HEK293 (cell line): ENCODE measurements at regions of chr18 and their contacts with region 1.

Region 1: DNA sequence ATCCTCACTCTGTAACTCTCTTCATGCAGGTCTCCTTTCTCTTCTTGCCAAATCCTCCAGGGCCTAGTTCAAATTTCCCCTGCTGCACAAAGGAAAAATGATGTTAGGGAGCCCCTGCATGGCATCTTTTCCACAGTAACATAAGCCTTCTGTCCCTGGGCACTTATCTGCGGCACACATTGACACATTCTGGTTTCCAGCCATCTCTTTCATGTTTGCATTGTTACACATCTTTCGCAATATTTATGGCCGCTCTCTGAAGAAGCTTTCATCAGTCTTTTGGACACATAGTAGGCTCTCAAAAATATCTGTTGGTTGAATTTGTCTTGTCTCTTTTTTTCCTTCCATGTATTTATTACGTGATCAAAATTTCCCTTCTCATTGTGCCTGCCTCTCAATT is 1806.1 kb upstream of the PIK3C3 start:
- H3K4me3 ChIP-seq: no peak overlapping the region
- H3K27ac ChIP-seq: no peak overlapping the region
- H3K4me1 ChIP-seq: no peaks in the 10 kb centered on the region
- CTCF ChIP-seq: no peak

Region 2: DNA sequence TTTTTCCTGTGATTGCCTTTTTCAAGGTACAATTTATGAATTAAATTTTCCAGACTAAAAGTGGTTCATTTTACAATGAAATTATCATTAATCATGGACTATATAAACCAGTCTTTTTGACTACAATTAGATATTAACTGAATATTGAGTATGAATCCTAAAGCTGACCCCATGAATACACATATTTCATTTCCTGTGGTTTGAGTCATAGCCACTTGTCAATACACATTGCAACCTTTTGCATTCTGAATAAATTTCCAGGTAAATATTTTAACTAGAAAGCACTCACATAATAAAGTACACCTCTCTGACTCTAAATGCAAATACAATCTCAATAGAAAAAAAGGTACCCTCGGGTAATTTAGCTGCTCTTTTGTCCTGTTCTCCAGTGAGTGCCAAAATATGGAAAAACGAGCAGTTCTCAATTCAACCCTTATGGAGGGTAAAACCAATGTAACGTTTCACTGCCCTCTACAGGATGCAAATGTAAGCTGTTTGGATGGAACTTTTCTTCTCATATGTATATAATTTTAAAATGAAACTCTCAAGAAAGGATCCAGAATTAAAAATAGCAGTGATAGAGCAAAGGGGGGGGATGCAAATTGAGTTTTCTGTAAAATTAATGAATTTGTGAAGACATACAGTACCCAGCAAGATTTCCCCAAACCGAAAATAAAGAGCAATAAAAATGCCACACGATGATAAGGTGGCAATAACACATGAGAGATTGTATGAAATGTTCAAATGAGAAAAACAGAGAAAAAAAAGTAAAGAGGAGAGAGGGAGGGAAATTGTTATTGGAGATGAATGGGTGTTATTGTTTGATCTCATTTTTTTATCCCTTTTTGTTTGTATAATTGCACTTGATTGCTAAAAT is 10.4 kb after region 1 on chr18:
- CTCF ChIA-PET with region 1: interaction called, 14 read pairs
- POLR2A ChIA-PET with region 1: no interaction called
- H3K4me3 ChIP-seq: no peak overlapping the region
- H3K27ac ChIP-seq: no peak overlapping the region
- H3K4me1 ChIP-seq: no peaks in the 10 kb centered on the region
- CTCF ChIP-seq: no peak

Region 3: DNA sequence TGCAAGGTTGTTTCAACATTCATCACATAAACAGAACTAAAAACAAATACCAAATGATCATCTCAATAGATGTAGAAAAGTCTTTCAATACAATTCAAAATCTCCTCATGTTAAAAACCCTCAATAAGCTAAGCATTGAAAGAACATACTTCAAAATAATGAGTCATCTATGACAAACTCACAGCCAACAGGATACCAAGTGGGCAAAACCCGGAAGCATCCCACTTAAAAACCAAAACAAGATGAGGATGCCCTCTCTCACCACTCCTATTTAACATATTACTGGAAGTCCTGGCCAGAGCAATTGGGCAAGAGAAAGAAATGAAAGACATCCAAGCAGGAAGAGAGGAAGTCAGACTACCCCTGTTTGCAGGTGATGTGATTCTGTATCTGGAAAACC is 813.8 kb after region 1 on chr18:
- CTCF ChIA-PET with region 1: no interaction called
- POLR2A ChIA-PET with region 1: no interaction called
- H3K4me3 ChIP-seq: no peak overlapping the region
- H3K27ac ChIP-seq: no peak overlapping the region
- H3K4me1 ChIP-seq: no peaks in the 10 kb centered on the region
- CTCF ChIP-seq: no peak